Right ventricle myocardium inferior (tissue), 1 donor: ENCODE measurements at regions of chr2 and their contacts with region 1.

Region 1: DNA sequence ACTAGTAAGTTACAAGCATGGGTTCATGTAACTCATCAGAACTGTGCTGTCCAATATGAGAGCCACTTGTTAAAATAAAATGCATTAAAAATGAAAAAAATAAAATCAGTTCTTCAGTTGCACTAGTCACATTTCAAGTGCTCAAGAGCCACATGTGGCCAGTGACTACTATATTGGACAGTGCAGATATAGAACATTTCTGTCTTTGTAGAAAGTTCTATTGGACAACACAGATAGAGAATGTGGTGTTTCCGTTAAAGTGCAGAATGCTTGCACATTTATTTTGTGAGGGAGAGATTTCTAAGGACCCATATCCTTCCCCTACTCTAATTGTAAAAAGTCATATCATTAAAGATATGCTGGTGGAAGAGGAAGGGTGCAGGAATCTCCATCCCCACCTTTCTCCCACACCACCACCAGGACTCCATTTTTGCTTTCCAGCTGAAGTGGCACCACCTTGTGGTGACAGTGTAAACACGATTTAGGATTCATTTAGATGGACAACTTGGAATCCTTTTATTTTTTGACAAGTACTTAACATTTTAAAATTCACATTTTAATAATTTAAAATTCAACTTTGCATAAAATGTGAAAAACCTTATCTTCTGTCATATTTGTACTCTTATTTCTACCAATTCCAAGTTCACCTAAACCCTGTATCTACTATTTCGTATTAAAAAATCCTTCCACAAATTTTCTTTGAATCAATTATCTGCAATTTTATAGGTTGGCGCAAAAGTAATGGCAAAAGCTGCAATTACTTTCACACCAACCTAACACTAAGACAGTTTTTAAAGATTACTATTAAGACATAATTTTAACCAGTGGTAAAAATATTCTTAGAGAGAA is 9.4 kb upstream of the CD302 start:
- DNase-seq: no peak
- ATAC-seq: no peak

Region 2: GRCh38 chr2:159755788-159756187 is 51.6 kb before region 1 on chr2:
- intact Hi-C with region 1: no loop called
- DNase-seq: no peak
- ATAC-seq: no peak

Region 3: DNA sequence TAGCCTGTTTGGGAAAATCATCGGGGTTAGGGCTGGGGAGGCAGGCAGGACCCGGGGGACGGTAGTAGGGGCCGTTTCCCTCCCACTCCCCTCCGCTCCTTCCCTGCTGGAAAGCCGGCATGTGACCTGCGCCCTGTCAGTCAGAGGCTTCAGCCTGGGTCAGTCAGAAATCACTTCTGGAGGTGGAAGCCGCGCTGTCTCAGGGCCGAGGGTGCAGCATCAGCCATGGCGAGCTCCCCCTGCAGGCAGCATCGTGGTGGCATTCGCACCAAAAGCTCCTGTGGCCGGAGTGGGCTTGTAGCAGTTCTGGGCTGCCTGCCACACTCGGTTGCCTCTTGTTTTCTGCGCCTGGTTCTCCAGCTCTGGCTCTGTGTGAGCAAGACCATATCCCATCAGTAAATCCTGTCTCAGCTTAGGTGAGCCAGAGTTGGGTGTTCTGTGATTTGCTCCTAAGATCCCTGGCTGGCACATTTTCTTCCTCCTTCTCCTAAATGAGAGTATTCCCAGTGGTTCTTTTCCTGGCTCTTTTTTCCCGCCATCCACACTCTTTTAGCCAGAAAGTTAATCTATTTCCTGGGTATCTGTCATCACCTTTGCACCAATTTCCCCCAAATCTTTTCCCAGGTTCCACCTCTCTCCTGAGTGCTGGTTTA is 114.5 kb after region 1 on chr2:
- intact Hi-C with region 1: loop called (anchors 5 kb)
- DNase-seq: peak; percentile 91
- ATAC-seq: peak; percentile 79

Region 4: DNA sequence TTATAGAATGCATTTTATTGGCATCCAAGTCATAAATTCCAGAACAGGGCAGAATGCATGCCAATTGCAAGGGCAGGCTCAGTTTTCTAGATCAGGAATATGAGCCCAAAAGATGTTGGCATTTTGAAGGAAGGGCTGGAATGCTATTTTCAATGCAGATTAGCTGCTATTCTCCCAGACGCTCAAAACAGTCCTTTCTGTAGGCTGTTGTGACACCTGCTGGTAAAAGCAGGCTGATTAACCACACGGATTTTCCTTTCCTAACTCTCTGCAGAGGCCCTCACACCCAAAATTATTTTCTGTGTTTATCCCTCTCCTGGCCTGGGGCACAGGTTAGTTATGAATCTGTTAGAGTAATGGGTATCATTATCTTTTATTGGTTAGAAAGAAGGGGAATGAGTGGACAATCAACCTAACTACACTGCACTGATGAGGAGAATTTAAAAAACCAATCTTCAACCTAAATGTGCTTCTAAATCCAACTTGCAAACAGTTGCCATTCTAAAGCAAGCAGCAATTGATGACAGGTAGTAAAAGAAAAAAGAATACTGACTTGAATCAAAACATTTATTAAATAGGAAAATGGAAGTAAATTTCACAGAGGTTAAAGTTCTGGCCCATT is 161.0 kb after region 1 on chr2:
- intact Hi-C with region 1: loop called (anchors 5 kb)
- DNase-seq: no peak
- ATAC-seq: peak; percentile 34